GM10248 (cell line): ENCODE measurements at regions of chr7 and their contacts with region 1.

Region 1: DNA sequence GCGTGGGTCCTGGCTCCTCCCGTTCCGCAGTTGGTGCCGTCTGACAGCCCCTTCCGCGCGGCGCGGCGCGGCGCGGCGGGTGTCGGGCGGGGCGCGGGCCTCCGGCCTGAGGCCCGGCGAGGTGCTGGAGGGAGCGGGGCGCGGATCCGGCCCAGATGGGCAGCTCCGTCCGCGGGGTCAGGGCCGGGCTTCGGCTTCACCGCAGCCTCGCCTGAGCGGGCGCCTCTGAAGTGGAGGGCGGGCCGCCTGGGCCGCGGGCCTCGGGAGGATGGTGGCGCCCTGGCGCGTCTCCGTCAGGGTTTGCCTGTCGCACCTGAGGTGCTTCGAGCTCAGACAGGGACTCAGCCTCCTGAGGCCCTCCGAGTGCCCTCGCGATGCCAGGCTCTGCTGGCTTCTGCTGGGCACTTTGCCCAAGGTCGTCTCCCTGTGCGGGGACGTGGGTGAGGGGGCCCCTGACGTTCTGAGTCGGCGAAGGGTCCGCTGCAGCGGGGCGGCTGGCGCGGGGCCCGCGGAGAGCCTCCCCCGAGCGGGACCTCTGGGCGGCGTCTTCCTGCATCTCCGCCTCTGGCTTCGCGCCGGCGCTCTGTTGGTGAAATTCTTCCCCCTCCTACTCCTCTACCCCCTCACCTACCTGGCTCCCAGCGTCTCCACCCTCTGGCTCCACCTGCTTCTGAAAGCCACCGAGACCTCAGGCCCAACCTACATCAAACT is 473 bp downstream of the ADCK2 start:
- DNase-seq: peak; percentile 66
- CTCF ChIP-seq: no peak

Region 2: GRCh38 chr7:140653319-140654108 is 19.7 kb before region 1 on chr7:
- CTCF ChIA-PET with region 1: interaction called, 13 read pairs
- POLR2A ChIA-PET with region 1: no interaction called
- DNase-seq: peak; percentile 49
- CTCF ChIP-seq: peak; percentile 79

Region 3: DNA sequence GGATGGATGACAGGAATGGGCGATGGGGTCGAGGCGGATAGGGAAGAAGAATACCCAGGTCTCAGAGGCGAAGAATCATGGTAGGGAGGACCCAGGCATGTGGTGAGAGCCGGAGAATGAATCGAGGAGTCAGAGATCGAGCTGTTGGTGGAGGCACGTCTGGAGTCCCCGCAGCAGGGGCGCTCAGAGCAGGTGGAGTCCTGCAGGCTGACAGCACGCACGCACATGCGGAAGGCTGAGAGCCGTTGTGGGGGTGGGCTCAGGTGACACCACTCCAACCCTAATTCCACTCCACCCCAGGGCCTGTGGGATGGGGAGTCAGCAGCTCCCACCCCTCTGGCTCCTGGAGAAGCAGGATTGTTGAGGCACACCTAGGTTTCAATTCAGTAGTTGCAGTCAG is 11.3 kb after region 1 on chr7:
- CTCF ChIA-PET with region 1: interaction called, 23 read pairs
- POLR2A ChIA-PET with region 1: no interaction called
- DNase-seq: no peak
- CTCF ChIP-seq: no peak